ENCODE measurements at regions of chr15 and their contacts with region 1.

Region 1: GRCh38 chr15:83830381-83830780 is 176.5 kb downstream of the ADAMTSL3 start:
- DNase-seq: no peak
- H3K4me3 ChIP-seq: no peak overlapping the region
- H3K27ac ChIP-seq: no peak overlapping the region
- H3K27me3 ChIP-seq: no peaks in the 10 kb centered on the region
- CTCF ChIP-seq: no peak

Region 2: GRCh38 chr15:83813682-83814081 is 16.7 kb before region 1 on chr15:
- intact Hi-C with region 1: loop called in 1 of 2 experiments (anchors 1 kb)
- DNase-seq: no peak
- H3K4me3 ChIP-seq: no peak overlapping the region
- H3K27ac ChIP-seq: no peak overlapping the region
- H3K27me3 ChIP-seq: no peaks in the 10 kb centered on the region
- CTCF ChIP-seq: no peak

Region 3: DNA sequence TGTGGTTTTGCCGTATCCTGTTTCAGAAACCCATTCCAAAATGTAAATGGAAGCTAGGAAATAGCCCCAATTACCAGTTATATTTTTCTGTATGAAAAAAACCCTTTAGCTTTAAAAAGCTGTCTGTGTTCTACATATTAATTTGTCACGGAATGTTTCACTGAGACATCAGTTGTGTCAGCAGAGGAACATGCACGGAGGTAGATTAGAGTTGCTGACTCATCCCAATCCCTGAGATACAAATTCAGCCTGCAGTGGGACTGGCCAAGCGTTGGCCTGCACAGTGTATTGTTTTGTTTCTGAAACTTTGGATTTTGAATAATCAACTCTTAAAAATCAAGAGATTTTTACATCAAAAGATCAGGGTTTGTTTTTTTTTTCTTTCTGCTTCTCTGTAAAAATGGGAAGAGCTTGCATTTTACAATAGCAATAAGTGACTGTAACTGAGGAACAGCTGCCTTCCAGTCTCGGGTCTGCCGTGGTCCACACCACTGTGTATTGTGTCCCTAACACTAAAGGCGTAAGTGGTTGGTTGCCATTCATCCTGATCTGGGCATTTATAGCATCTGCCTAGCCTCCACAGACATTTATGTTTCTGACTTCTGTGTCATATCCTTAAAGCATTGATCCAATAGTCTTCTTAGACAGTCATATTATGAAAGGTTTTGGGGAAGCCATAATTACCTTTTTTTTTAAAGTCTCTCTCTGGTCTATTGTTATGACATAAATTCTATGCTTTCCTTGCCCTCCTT is 41.6 kb after region 1 on chr15:
- intact Hi-C with region 1: no loop called
- DNase-seq: peak in 2 of 10 donors; percentile 10 to 15
- H3K4me3 ChIP-seq: peak overlapping the region in 3 of 59 donors; percentile 2 to 6 (median 5)
- H3K27ac ChIP-seq: peak overlapping the region in 24 of 59 donors; percentile 6 to 53 (median 29)
- H3K27me3 ChIP-seq: no peaks in the 10 kb centered on the region
- CTCF ChIP-seq: no peak

Region 4: DNA sequence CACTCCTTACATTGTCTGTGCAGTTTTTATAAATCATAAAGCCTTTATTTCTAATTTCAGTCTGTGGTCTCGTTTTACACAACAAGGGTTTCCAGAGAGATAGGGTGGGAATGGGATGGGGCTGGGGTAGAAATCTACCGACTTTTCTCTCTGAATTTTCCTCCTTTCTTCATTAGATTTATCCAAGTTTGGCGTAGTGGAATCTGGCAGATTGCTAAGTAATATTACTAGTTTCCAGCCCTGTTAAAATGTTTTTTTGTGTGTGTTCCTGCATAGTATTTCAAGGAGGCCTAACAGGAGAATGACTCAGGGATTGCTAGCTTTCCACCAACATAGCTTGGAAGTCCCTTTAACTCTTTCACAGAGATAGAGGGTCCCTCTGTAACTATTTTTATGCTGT is 219.7 kb after region 1 on chr15:
- intact Hi-C with region 1: no loop called
- DNase-seq: no peak
- H3K4me3 ChIP-seq: no peak overlapping the region
- H3K27ac ChIP-seq: no peak overlapping the region
- H3K27me3 ChIP-seq: no peaks in the 10 kb centered on the region
- CTCF ChIP-seq: no peak

Measured in dorsolateral prefrontal cortex (tissue), 120 donors.